ENCODE measurements at regions of chr9 and their contacts with region 1.

Region 1: GRCh38 chr9:15135164-15135792 is 171.7 kb downstream of the TTC39B start:
- DNase-seq: peak; percentile 41 to 47
- H3K4me3 ChIP-seq: peak overlapping the region; percentile 43; the same call in 1 of the 2 replicates
- H3K27ac ChIP-seq: no peak overlapping the region
- H3K4me1 ChIP-seq: no peaks in the 10 kb centered on the region
- H3K27me3 ChIP-seq: no peaks in the 10 kb centered on the region
- CTCF ChIP-seq: peak; percentile 82

Region 2: GRCh38 chr9:13979941-13980318 is 1155.3 kb before region 1 on chr9:
- CTCF ChIA-PET with region 1: interaction called, 12 read pairs
- POLR2A ChIA-PET with region 1: no interaction called
- intact Hi-C with region 1: no loop called
- DNase-seq: no peak
- H3K4me3 ChIP-seq: no peak overlapping the region
- H3K27ac ChIP-seq: no peak overlapping the region
- H3K4me1 ChIP-seq: no peaks in the 10 kb centered on the region
- H3K27me3 ChIP-seq: no peaks in the 10 kb centered on the region
- CTCF ChIP-seq: no peak

Region 3: DNA sequence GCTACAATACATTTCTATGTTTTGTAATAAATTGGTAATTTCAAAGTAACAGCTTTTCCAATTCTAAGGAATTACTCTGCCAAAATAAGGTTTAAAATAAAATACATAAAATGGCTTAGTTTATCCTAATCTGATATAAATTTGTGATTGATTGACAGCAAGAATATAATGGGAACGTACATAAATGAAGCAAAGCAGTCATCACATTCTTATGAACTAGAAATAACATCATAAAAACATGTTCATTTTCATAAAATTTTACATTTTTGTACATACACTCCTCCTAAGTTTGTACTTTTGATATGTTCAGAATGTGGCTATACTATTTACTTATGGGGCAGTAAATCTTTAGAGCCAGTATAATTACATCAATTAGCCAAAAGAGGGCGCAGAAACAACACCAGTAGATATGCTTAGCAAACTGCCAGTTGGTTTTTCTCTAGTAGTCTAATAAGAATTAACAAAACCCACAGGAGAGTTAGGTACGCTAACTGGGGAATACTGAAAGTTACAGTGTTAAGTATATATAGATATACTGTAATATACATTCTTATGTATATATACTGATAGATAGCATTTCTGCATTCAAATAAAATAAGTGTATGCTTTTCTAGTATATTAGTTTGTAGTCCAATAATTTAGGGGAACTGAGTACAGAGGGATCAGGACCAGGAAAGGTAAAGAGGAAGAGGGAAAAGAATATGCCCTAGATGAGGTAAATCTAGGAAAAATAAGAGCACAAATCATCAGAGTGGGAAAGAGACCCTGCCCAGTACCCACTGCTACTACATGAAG is 518.9 kb before region 1 on chr9:
- CTCF ChIA-PET with region 1: no interaction called
- POLR2A ChIA-PET with region 1: no interaction called
- intact Hi-C with region 1: loop called (anchors 5 kb)
- DNase-seq: no peak
- H3K4me3 ChIP-seq: no peak overlapping the region
- H3K27ac ChIP-seq: no peak overlapping the region
- H3K4me1 ChIP-seq: no peaks in the 10 kb centered on the region
- H3K27me3 ChIP-seq: no peaks in the 10 kb centered on the region
- CTCF ChIP-seq: peak; percentile 67

Region 4: GRCh38 chr9:15552636-15553527 is 417.6 kb after region 1 on chr9 and contains the start of gene CCDC171:
- CTCF ChIA-PET with region 1: no interaction called
- POLR2A ChIA-PET with region 1: interaction called, 23 read pairs
- intact Hi-C with region 1: no loop called
- DNase-seq: peak; percentile 84 to 86
- H3K4me3 ChIP-seq: peak within 1 kb of the TSS; percentile 67
- H3K27ac ChIP-seq: peak within 1 kb of the TSS; percentile 26; the same call in 1 of the 2 replicates
- H3K4me1 ChIP-seq: 0 out of 2 replicates have a peak, but pooled peaks cover 9% of the 10 kb centered on the region
- H3K27me3 ChIP-seq: no peaks in the 10 kb centered on the region
- CTCF ChIP-seq: no peak
- total RNA-seq, gene CCDC171: 2.4 and 2.5 TPM in 2 replicates